ENCODE measurements at regions of chr19 and their contacts with region 1.

Region 1: GRCh38 chr19:1992759-1993260 is 22.7 kb downstream of the BTBD2 start:
- DNase-seq: no peak
- H3K4me3 ChIP-seq: no peak overlapping the region
- H3K27ac ChIP-seq: no peak overlapping the region
- H3K4me1 ChIP-seq: no peaks in the 10 kb centered on the region
- H3K27me3 ChIP-seq: no peaks in the 10 kb centered on the region
- CTCF ChIP-seq: no peak

Region 2: DNA sequence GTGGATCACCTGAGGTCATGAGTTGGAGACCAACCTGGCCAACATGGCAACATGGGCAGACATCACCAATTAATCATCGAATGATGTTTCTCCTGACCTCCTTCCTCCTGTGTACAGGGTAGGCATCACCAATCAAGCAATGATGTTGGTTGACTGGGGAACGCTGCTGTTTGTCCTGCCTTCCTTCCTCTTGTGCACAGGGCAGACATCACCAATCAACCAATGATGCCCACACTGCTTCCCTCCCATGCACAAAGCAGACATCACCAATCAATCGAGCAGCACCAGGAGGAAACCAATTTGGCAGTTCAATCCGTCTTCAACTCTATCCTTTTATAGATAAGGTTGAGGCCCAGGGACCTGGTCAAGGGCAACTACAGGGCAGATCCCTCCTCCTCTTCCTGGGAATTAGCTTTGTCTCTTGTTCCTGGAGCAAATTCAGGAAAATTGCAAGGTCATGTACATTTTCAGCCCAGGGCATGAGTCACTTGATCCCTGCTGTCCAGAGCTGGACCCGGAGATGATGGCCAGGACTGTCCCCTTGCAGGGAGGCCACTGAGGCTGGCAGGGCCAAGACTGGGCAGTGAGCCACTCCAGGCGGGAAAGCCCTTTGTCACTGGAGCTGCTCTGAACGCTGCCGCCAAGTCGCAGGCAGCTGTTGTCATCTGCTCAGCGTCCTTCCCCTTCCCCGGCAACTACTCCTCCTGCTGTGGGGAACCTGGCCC is 57.2 kb before region 1 on chr19:
- CTCF ChIA-PET with region 1: no interaction called
- POLR2A ChIA-PET with region 1: no interaction called
- intact Hi-C with region 1: no loop called
- DNase-seq: peak; percentile 51
- H3K4me3 ChIP-seq: no peak overlapping the region
- H3K27ac ChIP-seq: no peak overlapping the region
- H3K4me1 ChIP-seq: peaks cover 18% of the 10 kb centered on the region
- H3K27me3 ChIP-seq: no peaks in the 10 kb centered on the region
- CTCF ChIP-seq: no peak

Region 3: DNA sequence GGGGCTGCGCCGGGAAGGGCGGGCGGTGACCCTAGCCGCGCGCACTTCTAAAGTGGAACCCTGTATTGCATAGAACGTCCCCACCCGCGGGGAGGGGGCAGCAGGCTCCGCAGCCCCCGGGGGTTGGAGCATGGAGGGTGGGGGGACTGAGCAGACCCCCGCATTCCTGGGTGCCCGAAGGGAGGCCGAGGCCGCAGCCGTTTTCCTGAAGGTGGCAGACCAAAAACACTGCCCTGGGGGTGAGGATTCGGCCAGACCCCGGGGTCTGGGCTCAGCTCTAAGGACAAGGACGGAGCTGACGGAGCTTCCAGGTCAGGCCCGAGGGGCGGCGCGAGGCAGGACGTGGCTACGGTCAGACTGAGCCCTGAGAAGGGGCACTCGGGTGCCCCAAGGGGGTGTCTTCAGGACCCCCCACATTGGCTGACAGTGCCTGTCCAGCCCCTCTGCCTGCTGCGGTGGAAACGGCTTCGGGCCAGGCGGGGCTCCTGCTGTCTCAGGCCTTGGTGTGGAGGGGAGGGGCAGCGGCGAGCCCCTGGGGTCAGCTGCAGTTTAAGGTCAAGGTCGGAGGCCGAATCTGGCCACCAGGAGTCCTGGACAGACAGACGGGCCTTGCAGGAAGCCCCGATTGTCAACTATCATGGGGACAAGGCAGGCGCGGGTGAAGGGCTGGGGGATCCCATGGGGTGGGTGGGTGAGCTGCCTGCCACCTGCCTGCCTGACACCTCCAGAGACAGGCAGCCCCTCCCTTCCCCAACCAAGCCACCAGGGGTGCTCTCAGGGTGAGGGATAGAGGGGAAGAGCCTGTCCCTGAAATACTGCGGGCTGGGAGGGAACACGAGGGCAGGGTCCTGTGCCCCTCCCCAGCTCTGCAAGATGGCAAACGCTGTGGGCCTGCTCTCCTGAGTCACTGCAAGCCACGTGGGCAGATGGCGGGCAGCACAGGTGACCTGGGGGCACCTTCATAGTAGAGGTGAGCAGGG is 45.8 kb after region 1 on chr19:
- CTCF ChIA-PET with region 1: no interaction called
- POLR2A ChIA-PET with region 1: interaction called, 10 read pairs
- intact Hi-C with region 1: no loop called
- DNase-seq: no peak
- H3K4me3 ChIP-seq: no peak overlapping the region
- H3K27ac ChIP-seq: peak overlapping the region; percentile 23
- H3K4me1 ChIP-seq: peaks cover 26% of the 10 kb centered on the region
- H3K27me3 ChIP-seq: no peaks in the 10 kb centered on the region
- CTCF ChIP-seq: no peak

Measured in A673 (cell line).